ENCODE measurements at regions of chr20 and their contacts with region 1.

Region 1: DNA sequence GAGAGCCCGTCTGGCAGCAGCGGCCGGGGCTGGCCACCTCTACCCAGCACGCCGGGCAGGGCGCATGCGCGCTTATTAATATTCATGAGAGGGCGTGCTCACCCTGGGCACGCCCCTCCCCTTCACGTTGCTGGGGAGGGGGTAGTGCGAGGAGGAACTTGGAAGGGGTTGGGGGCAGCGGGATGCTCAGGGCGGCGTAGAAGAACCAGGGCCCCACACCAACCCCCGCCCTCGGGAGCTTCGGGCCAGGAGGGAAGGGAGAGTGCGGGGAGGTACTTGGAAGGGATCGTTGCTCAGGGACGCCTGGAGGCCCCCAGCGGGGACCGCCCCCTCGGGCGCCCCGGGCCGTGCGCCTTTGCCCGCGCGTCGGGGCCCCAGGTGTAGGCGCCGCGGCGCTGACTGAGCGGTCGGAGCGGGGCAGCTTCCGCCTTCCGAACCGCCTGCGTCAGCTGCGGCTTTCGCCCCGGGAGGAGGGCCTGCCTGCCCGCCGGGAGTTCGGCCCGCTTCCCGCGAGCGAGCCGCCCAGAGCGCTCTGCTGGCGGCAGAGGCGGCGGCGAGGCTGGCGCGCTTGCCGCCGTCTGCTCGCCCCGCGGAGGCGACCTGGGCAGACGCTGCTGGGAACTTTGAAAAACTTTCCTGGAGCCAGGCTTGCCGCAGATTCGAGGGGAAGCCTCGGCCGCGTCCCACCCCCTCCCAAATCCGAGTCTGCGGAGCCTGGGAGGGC is at the start of gene JAG1:
- DNase-seq: peak; percentile 91 to 95
- H3K4me3 ChIP-seq: peak within 1 kb of the TSS; percentile 48 to 86 (median 79)
- H3K27ac ChIP-seq: peak within 1 kb of the TSS; percentile 87
- H3K4me1 ChIP-seq: peaks cover 0 to 19% (median 11%) of the 10 kb centered on the region in 4 experiments; a peak in 6 of 7 replicates
- H3K27me3 ChIP-seq: no peaks in the 10 kb centered on the region; a peak in 1 of 7 replicates
- CTCF ChIP-seq: no peak
- EP300 ChIP-seq: no peak
- POLR2A ChIP-seq: peak; percentile 58 to 74
- RAD21 ChIP-seq: no peak
- total RNA-seq, gene JAG1: 27.3 and 29.1 TPM in 2 replicates

Region 2: GRCh38 chr20:10352934-10353866 is 320.9 kb before region 1 on chr20:
- CTCF ChIA-PET with region 1: no interaction called
- POLR2A ChIA-PET with region 1: no interaction called
- DNase-seq: no peak
- H3K4me3 ChIP-seq: no peak overlapping the region
- H3K27ac ChIP-seq: no peak overlapping the region
- H3K4me1 ChIP-seq: peaks cover 4 to 18% (median 10%) of the 10 kb centered on the region in 4 experiments; a peak in 5 of 7 replicates
- H3K27me3 ChIP-seq: no peaks in the 10 kb centered on the region; a peak in 1 of 7 replicates
- CTCF ChIP-seq: no peak
- EP300 ChIP-seq: no peak
- POLR2A ChIP-seq: no peak
- RAD21 ChIP-seq: no peak

Region 3: DNA sequence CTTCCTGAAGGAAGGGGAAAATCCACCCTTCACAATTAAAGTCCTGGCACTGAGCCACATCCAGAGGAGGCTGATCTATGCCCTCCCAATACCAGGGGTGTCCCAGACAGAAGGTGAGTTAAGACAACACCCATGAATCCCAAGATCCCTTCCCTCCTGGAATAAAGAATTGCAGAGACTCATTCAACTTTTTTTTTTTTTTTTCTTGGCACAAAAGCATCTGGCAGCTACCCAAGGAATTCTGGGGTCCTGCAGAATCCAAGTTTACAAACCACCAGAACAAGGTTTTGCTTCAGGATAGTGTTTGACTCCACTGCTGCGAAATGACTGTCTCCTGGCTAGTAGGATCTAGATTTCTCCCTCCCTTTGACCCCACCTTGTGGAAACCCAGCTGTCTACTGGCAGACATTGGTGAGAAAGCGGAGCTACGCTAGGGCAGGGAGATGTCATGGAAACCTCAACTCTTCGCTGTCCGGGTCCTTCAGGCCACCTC is 37.8 kb before region 1 on chr20:
- CTCF ChIA-PET with region 1: interaction called, 19 read pairs
- POLR2A ChIA-PET with region 1: interaction called, 3 read pairs
- DNase-seq: no peak
- H3K4me3 ChIP-seq: no peak overlapping the region
- H3K27ac ChIP-seq: no peak overlapping the region
- H3K4me1 ChIP-seq: peaks cover 10 to 33% (median 25%) of the 10 kb centered on the region in 4 experiments
- H3K27me3 ChIP-seq: no peaks in the 10 kb centered on the region; a peak in 1 of 7 replicates
- CTCF ChIP-seq: no peak
- EP300 ChIP-seq: no peak
- POLR2A ChIP-seq: no peak
- RAD21 ChIP-seq: no peak

Region 4: GRCh38 chr20:10647465-10647864 is 26.7 kb before region 1 on chr20:
- CTCF ChIA-PET with region 1: interaction called, 13 read pairs
- POLR2A ChIA-PET with region 1: no interaction called
- DNase-seq: no peak
- H3K4me3 ChIP-seq: no peak overlapping the region
- H3K27ac ChIP-seq: no peak overlapping the region
- H3K4me1 ChIP-seq: peaks cover 4 to 18% (median 11%) of the 10 kb centered on the region in 4 experiments; a peak in 6 of 7 replicates
- H3K27me3 ChIP-seq: no peaks in the 10 kb centered on the region
- CTCF ChIP-seq: peak; percentile 59 to 72 (median 60)
- EP300 ChIP-seq: no peak
- POLR2A ChIP-seq: no peak
- RAD21 ChIP-seq: peak; percentile 50 to 66

Region 5: DNA sequence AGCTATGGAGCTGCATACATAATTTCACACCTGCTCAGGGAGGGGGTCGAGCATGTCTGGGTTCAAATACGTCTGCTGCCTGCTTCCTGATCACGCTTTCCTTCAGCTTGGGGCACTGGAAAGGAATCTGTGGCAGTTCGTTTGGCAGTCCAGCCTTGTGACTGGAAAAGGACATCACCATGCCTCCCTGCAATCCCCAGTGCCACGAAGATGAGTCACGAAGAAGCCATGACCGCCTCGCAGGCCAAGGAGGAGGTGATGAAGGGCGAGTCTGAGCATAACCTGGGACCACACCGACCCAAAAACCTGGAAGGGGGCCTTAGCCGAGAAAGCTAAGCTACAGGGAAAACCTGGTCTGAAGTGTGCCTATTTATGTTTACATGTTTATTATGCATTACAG is 13.5 kb before region 1 on chr20:
- CTCF ChIA-PET with region 1: interaction called, 14 read pairs
- POLR2A ChIA-PET with region 1: interaction called, 8 read pairs
- DNase-seq: no peak
- H3K4me3 ChIP-seq: no peak overlapping the region
- H3K27ac ChIP-seq: no peak overlapping the region
- H3K4me1 ChIP-seq: peaks cover 19 to 43% (median 33%) of the 10 kb centered on the region in 4 experiments
- H3K27me3 ChIP-seq: no peaks in the 10 kb centered on the region
- CTCF ChIP-seq: no peak
- EP300 ChIP-seq: no peak
- POLR2A ChIP-seq: no peak
- RAD21 ChIP-seq: no peak

Region 6: GRCh38 chr20:10686356-10687133 is 12.4 kb after region 1 on chr20:
- CTCF ChIA-PET with region 1: interaction called, 23 read pairs
- POLR2A ChIA-PET with region 1: interaction called, 8 read pairs
- DNase-seq: no peak
- H3K4me3 ChIP-seq: no peak overlapping the region
- H3K27ac ChIP-seq: no peak overlapping the region
- H3K4me1 ChIP-seq: peaks cover 0 to 3% (median 0%) of the 10 kb centered on the region in 4 experiments; a peak in 1 of 7 replicates
- H3K27me3 ChIP-seq: no peaks in the 10 kb centered on the region
- CTCF ChIP-seq: no peak
- EP300 ChIP-seq: no peak
- POLR2A ChIP-seq: no peak
- RAD21 ChIP-seq: no peak

Region 7: GRCh38 chr20:10696650-10697049 is 22.5 kb after region 1 on chr20:
- CTCF ChIA-PET with region 1: interaction called, 15 read pairs
- POLR2A ChIA-PET with region 1: interaction called, 3 read pairs
- DNase-seq: peak; percentile 15 to 87
- H3K4me3 ChIP-seq: no peak overlapping the region
- H3K27ac ChIP-seq: no peak overlapping the region
- H3K4me1 ChIP-seq: peaks cover 0 to 4% (median 2%) of the 10 kb centered on the region in 4 experiments; a peak in 3 of 7 replicates
- H3K27me3 ChIP-seq: no peaks in the 10 kb centered on the region
- CTCF ChIP-seq: peak; percentile 56 to 87 (median 73)
- EP300 ChIP-seq: no peak
- POLR2A ChIP-seq: no peak
- RAD21 ChIP-seq: peak; percentile 51 to 70

Region 8: DNA sequence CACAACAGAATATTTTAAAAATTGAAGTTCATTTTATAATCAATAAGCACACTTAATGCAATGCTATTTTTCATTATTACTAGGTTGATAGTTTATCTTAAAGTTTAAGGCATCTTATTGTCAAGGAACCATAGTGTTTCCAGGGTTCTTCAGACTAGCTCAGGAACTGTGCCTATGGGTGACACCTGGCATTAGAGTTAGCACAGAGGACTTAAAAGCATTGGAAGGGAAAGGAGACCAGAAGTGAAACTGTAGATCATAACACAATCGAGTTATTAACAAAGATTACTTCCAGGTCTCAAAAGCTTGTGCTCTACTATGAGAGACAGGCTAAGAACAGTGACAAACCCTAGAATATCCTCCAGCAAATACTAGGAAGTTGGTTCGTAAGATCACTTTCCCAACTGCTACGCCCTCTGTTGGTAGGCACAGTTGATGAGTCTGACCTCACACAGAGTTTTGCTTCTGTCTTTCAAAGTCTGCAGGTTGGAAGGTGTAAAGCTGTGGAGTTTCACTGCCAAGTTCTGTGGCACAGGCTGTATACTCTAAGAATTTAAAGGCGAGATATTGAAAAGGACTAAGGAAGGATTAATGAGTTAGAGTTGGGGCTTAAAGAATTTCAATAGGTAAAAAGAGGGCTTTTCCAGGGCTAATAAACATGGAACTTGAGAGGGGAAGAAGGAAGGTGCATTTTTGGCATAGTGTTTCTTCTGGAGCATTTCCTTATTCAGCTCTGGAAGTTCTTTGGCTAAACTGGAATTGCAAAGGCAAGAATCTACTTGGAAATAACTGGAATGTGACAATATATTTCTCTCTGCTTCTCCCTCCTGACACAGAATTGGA is 531.0 kb after region 1 on chr20:
- CTCF ChIA-PET with region 1: interaction called, 13 read pairs
- POLR2A ChIA-PET with region 1: no interaction called
- DNase-seq: peak; percentile 33 to 55
- H3K4me3 ChIP-seq: no peak overlapping the region
- H3K27ac ChIP-seq: no peak overlapping the region
- H3K4me1 ChIP-seq: no peaks in the 10 kb centered on the region; a peak in 1 of 7 replicates
- H3K27me3 ChIP-seq: no peaks in the 10 kb centered on the region
- CTCF ChIP-seq: peak; percentile 45 to 98 (median 74)
- EP300 ChIP-seq: no peak
- POLR2A ChIP-seq: no peak
- RAD21 ChIP-seq: peak; percentile 84 to 86